ENCODE measurements at regions of chr1 and their contacts with region 1.

Region 1: DNA sequence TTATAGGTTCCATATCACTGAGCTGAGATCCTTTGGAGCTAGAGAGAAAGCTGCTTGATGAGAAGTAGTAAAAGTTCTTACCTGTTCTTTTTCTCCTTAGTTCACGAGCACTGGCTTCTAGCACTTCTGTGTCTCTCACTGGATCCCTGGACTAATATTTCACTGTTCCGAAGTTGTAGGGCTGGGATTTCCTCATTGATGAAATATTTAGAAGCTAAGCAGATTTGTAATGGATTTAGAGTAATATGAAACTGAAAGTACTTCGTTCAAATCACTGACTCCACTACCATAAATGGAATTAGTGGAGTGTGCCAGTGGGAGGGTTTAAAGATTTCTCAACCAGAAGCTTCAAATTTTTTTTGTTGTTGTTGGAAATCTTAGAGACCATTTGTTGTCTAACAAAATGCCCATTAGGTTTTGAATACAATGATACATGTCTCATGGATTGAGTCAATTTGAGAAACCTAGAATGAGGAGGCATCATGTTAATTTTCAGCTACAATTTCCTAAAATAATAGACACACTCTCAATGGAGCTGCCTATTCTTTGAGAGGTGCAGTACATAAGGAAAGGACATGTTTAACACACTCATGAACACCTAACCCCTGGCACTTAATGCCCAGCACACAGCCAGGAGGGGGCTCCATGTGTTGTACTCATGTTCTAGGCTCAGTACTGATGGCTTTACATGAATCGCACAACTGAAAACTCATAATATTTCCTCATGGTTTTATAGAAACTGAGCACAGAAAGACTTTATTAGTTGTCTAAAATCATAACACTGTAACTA is at the start of gene GBP1:
- DNase-seq: no peak
- H3K4me3 Mint-ChIP-seq: peak within 1 kb of the TSS; percentile 91
- H3K27ac Mint-ChIP-seq: peak within 1 kb of the TSS; percentile 85
- H3K4me1 Mint-ChIP-seq: peaks cover 77% of the 10 kb centered on the region
- H3K27me3 Mint-ChIP-seq: no peaks in the 10 kb centered on the region
- total RNA-seq, gene GBP1: 39.1 and 39.5 TPM in 2 replicates

Region 2: GRCh38 chr1:89022167-89022959 is 42.9 kb before region 1 on chr1 and contains the start of gene GBP3:
- intact Hi-C with region 1: loop called (anchors 1 kb)
- DNase-seq: no peak
- H3K4me3 Mint-ChIP-seq: peak within 1 kb of the TSS; percentile 86
- H3K27ac Mint-ChIP-seq: peak within 1 kb of the TSS; percentile 84
- H3K4me1 Mint-ChIP-seq: peaks cover 64% of the 10 kb centered on the region
- H3K27me3 Mint-ChIP-seq: no peaks in the 10 kb centered on the region
- total RNA-seq, gene GBP3: 12.0 and 14.5 TPM in 2 replicates

Region 3: DNA sequence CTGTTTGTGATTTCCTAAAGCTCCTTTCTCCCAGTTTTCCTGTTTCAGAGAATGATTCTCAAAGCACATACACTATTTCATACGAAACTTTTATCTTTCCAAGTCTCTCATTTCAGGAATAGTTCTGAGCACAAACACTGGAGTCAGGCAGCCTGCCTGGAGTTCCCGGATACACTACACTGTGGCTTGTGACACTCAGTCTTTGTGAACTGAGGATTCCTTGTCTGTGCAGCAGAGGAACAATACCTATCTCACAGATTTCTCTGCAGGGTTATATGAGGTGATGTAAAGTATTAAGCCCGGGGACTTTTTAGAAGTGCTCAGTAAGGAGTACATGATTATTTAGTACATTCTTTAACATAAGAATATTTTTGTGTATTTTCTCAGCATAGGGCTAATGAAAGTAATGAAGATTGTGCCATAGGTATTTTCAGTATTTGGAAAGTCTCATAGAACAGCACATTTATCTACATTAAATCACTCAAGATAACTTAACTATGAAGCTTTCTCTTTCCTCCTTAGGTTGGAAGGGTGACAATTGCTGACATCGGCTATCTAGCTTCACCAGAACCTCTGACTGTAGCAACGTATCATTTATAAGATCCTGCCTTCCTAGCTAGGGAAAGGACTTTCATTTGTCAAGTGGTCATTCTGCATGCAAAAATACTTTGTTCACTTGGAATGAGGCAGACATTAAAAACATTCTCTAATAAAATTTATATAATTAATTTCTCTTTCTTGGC is 47.8 kb after region 1 on chr1:
- intact Hi-C with region 1: no loop called
- DNase-seq: no peak
- H3K4me3 Mint-ChIP-seq: no peak overlapping the region
- H3K27ac Mint-ChIP-seq: no peak overlapping the region
- H3K4me1 Mint-ChIP-seq: peaks cover 47% of the 10 kb centered on the region
- H3K27me3 Mint-ChIP-seq: no peaks in the 10 kb centered on the region

Measured in activated T-helper 1 cell treated with anti-CD3 and anti-CD28 coated beads, Interleukin-12 subunit alpha, Interleukin-12 subunit beta, Interleukin-2, Interleukin-4 antibody, amounts not matched to agents 30 ng/mL and 10 ng/mL and 1 ng/mL, durations not matched to agents 14 hours and 24 hours and 36 hours (primary cell).